Left ventricle myocardium inferior (tissue), 1 donor: ENCODE measurements at regions of chr9 and their contacts with region 1.

Region 1: GRCh38 chr9:89602978-89603766 is 1.6 kb upstream of the GADD45G start:
- DNase-seq: peak; percentile 89
- H3K4me3 ChIP-seq: peak overlapping the region; percentile 76
- H3K27ac ChIP-seq: peak overlapping the region; percentile 93
- H3K4me1 ChIP-seq: peaks cover 54% of the 10 kb centered on the region
- H3K27me3 ChIP-seq: no peaks in the 10 kb centered on the region
- CTCF ChIP-seq: peak; percentile 86

Region 2: DNA sequence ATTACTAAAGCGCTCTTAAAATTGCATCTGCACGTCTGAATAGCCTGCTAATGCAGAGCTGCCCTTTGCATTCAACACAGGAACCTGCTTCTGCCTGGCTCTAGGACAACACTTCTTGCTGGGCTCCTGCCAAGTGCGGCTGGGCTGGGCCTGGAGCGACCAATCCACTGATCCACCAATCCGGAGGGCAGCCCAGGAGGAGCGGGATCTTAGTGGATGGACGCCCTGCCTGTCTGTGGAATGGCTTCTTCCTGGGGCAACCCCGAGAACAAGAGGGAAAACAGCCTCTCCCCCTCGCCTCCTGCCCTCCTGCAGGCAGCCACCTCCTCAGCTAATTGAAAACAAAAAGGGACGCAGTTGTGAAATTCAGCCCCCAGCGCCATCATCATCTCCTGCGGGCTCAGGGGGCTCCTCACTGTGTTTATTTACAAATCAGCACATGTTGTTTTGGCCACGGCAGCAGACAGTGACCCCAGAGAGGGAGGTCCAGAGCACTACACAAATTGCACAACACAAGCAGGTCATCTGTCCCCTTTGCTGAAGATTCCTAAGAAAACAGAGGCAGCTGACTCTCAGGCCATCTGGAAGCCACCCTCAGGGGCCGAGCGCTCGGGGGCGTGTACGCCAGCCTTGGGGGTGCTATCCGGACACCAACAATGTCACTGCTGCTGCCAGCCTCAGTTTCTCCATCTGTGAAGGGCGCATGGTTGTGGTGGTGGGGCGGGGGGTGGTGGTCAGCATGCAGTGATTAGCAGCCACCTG is 59.0 kb after region 1 on chr9:
- intact Hi-C with region 1: loop called (anchors 10 kb)
- DNase-seq: peak; percentile 99
- H3K4me3 ChIP-seq: peak overlapping the region; percentile 56
- H3K27ac ChIP-seq: peak overlapping the region; percentile 92
- H3K4me1 ChIP-seq: peaks cover 27% of the 10 kb centered on the region
- H3K27me3 ChIP-seq: no peaks in the 10 kb centered on the region
- CTCF ChIP-seq: no peak

Region 3: GRCh38 chr9:89929673-89930480 is 326.7 kb after region 1 on chr9:
- intact Hi-C with region 1: loop called (anchors 10 kb)
- DNase-seq: peak; percentile 34
- H3K4me3 ChIP-seq: no peak overlapping the region
- H3K27ac ChIP-seq: peak overlapping the region; percentile 37
- H3K4me1 ChIP-seq: peaks cover 46% of the 10 kb centered on the region
- H3K27me3 ChIP-seq: no peaks in the 10 kb centered on the region
- CTCF ChIP-seq: no peak

Region 4: GRCh38 chr9:90099262-90099963 is 496.2 kb after region 1 on chr9:
- intact Hi-C with region 1: loop called (anchors 2 kb)
- DNase-seq: no peak
- H3K4me3 ChIP-seq: no peak overlapping the region
- H3K27ac ChIP-seq: no peak overlapping the region
- H3K4me1 ChIP-seq: peaks cover 25% of the 10 kb centered on the region
- H3K27me3 ChIP-seq: no peaks in the 10 kb centered on the region
- CTCF ChIP-seq: peak; percentile 65